Activated CD8-positive, alpha-beta memory T cell treated with anti-CD3 and anti-CD28 coated beads, Interleukin-2, amount 10 ng/mL, durations not matched to agents 7 days and 5 days (primary cell): ENCODE measurements at regions of chr2 and their contacts with region 1.

Region 1: GRCh38 chr2:110677530-110678456 is at the start of gene BUB1:
- DNase-seq: peak; percentile 98
- ATAC-seq: peak; percentile 89
- H3K4me3 Mint-ChIP-seq: peak within 1 kb of the TSS; percentile 85
- H3K27ac Mint-ChIP-seq: peak within 1 kb of the TSS; percentile 97
- H3K4me1 Mint-ChIP-seq: peaks cover 46% of the 10 kb centered on the region
- H3K27me3 Mint-ChIP-seq: no peaks in the 10 kb centered on the region
- total RNA-seq, gene BUB1: 126 to 153 TPM

Region 2: DNA sequence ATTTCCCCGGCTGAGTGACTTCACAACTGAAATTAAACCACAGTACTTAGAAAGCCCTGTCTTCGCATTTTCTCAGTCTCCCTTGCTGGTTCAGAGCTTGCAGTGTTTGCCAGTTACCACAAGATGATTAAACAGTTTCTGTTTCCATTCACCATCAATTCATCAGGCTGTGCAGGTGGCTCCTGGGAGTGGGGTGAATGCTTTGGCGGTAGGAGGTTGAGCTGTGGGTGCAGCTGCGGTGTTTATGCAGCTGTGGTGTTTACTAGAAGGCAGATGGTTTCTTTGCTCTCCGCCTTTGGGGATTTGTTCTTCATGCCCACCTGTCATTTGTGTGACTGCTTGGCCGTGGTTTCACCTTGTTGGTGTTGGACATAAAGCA is 70.7 kb after region 1 on chr2:
- CTCF ChIA-PET with region 1: interaction called, 15 read pairs
- DNase-seq: peak; percentile 92
- ATAC-seq: peak; percentile 95
- H3K4me3 Mint-ChIP-seq: peak overlapping the region; percentile 63
- H3K27ac Mint-ChIP-seq: peak overlapping the region; percentile 92
- H3K4me1 Mint-ChIP-seq: peaks cover 50% of the 10 kb centered on the region
- H3K27me3 Mint-ChIP-seq: peaks cover 36% of the 10 kb centered on the region

Region 3: GRCh38 chr2:110755491-110756078 is 77.8 kb after region 1 on chr2:
- CTCF ChIA-PET with region 1: interaction called, 14 read pairs
- DNase-seq: no peak
- ATAC-seq: no peak
- H3K4me3 Mint-ChIP-seq: no peak overlapping the region
- H3K27ac Mint-ChIP-seq: no peak overlapping the region
- H3K4me1 Mint-ChIP-seq: peaks cover 3% of the 10 kb centered on the region
- H3K27me3 Mint-ChIP-seq: peaks cover 41% of the 10 kb centered on the region